ENCODE measurements at regions of chr5 and their contacts with region 1.

Region 1: GRCh38 chr5:14871210-14872069 is at the start of gene ANKH:
- DNase-seq: peak; percentile 54 to 96 (median 72)

Region 2: GRCh38 chr5:14664302-14665100 is 206.9 kb before region 1 on chr5 and contains the start of gene OTULIN:
- intact Hi-C with region 1: loop called (anchors 5 kb)
- DNase-seq: peak; percentile 83 to 98 (median 88)

Region 3: GRCh38 chr5:14727428-14727865 is 144.0 kb before region 1 on chr5:
- intact Hi-C with region 1: loop called (anchors 5 kb)
- DNase-seq: peak; percentile 83 to 99 (median 89)

Region 4: GRCh38 chr5:14809369-14810155 is 61.9 kb before region 1 on chr5:
- intact Hi-C with region 1: loop called (anchors 5 kb)
- DNase-seq: peak in 5 of 10 donors; percentile 23 to 90 (median 41)

Region 5: GRCh38 chr5:14821100-14821845 is 50.2 kb before region 1 on chr5:
- intact Hi-C with region 1: loop called (anchors 5 kb)
- DNase-seq: no peak

Region 6: GRCh38 chr5:15003511-15003920 is 132.1 kb after region 1 on chr5:
- intact Hi-C with region 1: loop called (anchors 5 kb)
- DNase-seq: peak in 7 of 10 donors; percentile 28 to 92 (median 53)

Measured in posterior cingulate gyrus (tissue), 11 donors.